Dorsolateral prefrontal cortex (tissue), 120 donors: ENCODE measurements at regions of chr17 and their contacts with region 1.

Region 1: GRCh38 chr17:76501018-76501826 is at the start of gene RHBDF2:
- DNase-seq: peak in 9 of 10 donors; percentile 58 to 87 (median 72)
- H3K4me3 ChIP-seq: peak within 1 kb of the TSS; percentile 35 to 76 (median 62)
- H3K27ac ChIP-seq: peak within 1 kb of the TSS in 56 of 59 donors; percentile 18 to 94 (median 79)
- H3K27me3 ChIP-seq: no peaks in the 10 kb centered on the region
- CTCF ChIP-seq: peak in 1 of 56 donors; percentile 7
- total RNA-seq, gene RHBDF2: 7.0 to 64.1 (median 28.9) TPM

Region 2: GRCh38 chr17:76458580-76459490 is 42.4 kb before region 1 on chr17:
- intact Hi-C with region 1: loop called in 1 of 2 experiments (anchors 1 kb)
- DNase-seq: no peak
- H3K4me3 ChIP-seq: no peak overlapping the region
- H3K27ac ChIP-seq: no peak overlapping the region
- H3K27me3 ChIP-seq: no peaks in the 10 kb centered on the region
- CTCF ChIP-seq: peak in 27 of 56 donors; percentile 9 to 40 (median 21)

Region 3: GRCh38 chr17:76557368-76558197 is 56.4 kb after region 1 on chr17:
- intact Hi-C with region 1: no loop called
- DNase-seq: peak; percentile 80 to 94 (median 92)
- H3K4me3 ChIP-seq: peak overlapping the region; percentile 52 to 95 (median 81)
- H3K27ac ChIP-seq: peak overlapping the region in 56 of 59 donors; percentile 23 to 93 (median 80)
- H3K27me3 ChIP-seq: no peaks in the 10 kb centered on the region
- CTCF ChIP-seq: peak in 45 of 56 donors; percentile 15 to 61 (median 37)